Activated T-helper 2 cell treated with anti-CD3 and anti-CD28 coated beads, Interferon-gamma antibody, Interleukin-2, Interleukin-4, amounts not matched to agents 10 μg/mL and 5 μg/mL and 100 μg/mL, durations not matched to agents 14 hours and 24 hours and 36 hours (primary cell): ENCODE measurements at regions of chr15 and their contacts with region 1.

Region 1: GRCh38 chr15:84658080-84658787 is at the start of gene NMB:
- DNase-seq: peak; percentile 75
- H3K4me3 Mint-ChIP-seq: peak within 1 kb of the TSS; percentile 75
- H3K27ac Mint-ChIP-seq: peak within 1 kb of the TSS; percentile 73
- H3K4me1 Mint-ChIP-seq: peaks cover 25% of the 10 kb centered on the region
- H3K27me3 Mint-ChIP-seq: no peaks in the 10 kb centered on the region
- total RNA-seq, gene NMB: 2.5 and 3.0 TPM in 2 replicates

Region 2: DNA sequence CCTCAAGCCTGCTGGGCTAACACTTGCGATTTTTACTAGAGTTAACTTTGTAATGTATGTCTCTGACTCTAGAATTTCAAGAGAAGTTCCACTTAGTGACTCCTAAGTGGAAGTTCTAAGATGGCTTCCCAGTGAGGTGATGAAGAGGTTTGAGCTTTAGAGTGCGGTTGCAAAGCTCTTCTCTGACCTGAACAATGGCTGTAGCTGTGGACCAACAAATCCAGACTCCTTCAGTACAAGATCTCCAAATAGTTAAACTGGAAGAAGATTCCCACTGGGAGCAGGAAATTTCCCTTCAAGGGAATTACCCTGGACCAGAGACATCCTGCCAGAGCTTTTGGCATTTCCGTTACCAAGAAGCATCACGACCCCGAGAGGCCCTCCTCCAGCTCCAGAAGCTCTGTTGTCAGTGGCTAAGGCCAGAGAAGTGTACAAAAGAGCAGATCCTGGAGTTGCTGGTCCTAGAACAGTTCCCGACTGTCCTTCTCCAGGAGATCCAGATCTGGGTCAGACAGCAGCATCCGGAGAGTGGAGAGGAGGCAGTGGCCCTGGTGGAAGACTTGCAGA is 26.4 kb before region 1 on chr15:
- intact Hi-C with region 1: loop called (anchors 1 kb)
- DNase-seq: no peak
- H3K4me3 Mint-ChIP-seq: peak overlapping the region; percentile 95
- H3K27ac Mint-ChIP-seq: peak overlapping the region; percentile 92
- H3K4me1 Mint-ChIP-seq: peaks cover 34% of the 10 kb centered on the region
- H3K27me3 Mint-ChIP-seq: no peaks in the 10 kb centered on the region

Region 3: GRCh38 chr15:84734794-84735479 is 76.7 kb after region 1 on chr15:
- intact Hi-C with region 1: loop called (anchors 1 kb)
- DNase-seq: peak; percentile 72
- H3K4me3 Mint-ChIP-seq: peak overlapping the region; percentile 59
- H3K27ac Mint-ChIP-seq: peak overlapping the region; percentile 95
- H3K4me1 Mint-ChIP-seq: peaks cover 40% of the 10 kb centered on the region
- H3K27me3 Mint-ChIP-seq: no peaks in the 10 kb centered on the region

Region 4: DNA sequence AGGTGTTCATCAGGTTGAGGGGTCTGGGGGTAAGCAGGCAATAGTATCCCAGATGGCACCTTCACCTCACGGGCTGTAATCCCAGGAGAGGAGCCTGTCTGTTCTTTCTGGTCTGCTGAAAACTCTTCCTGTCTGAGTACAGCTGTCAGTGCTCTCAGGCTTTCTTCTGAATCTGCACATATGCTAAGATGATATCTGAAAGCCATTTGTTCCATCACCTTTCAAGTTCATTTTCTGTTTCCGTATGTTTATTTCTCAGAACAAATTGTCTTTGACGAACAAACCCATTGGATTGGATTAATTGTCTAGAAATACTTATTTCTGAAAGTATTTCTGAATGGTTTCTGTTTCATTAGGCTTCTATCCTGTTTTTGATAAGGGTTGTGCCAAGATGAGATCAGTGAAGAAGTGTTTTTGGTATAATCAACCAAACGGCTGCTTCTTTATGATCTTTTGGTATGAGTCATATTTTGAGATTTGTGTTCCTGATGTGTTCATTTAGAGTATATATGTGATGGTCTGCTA is 103.4 kb after region 1 on chr15:
- intact Hi-C with region 1: loop called (anchors 2 kb)
- DNase-seq: no peak
- H3K4me3 Mint-ChIP-seq: no peak overlapping the region
- H3K27ac Mint-ChIP-seq: no peak overlapping the region
- H3K4me1 Mint-ChIP-seq: peaks cover 30% of the 10 kb centered on the region
- H3K27me3 Mint-ChIP-seq: no peaks in the 10 kb centered on the region

Region 5: GRCh38 chr15:84904419-84904818 is 246.2 kb after region 1 on chr15:
- intact Hi-C with region 1: no loop called
- DNase-seq: no peak
- H3K4me3 Mint-ChIP-seq: no peak overlapping the region
- H3K27ac Mint-ChIP-seq: no peak overlapping the region
- H3K4me1 Mint-ChIP-seq: no peaks in the 10 kb centered on the region
- H3K27me3 Mint-ChIP-seq: peaks cover 5% of the 10 kb centered on the region

Region 6: DNA sequence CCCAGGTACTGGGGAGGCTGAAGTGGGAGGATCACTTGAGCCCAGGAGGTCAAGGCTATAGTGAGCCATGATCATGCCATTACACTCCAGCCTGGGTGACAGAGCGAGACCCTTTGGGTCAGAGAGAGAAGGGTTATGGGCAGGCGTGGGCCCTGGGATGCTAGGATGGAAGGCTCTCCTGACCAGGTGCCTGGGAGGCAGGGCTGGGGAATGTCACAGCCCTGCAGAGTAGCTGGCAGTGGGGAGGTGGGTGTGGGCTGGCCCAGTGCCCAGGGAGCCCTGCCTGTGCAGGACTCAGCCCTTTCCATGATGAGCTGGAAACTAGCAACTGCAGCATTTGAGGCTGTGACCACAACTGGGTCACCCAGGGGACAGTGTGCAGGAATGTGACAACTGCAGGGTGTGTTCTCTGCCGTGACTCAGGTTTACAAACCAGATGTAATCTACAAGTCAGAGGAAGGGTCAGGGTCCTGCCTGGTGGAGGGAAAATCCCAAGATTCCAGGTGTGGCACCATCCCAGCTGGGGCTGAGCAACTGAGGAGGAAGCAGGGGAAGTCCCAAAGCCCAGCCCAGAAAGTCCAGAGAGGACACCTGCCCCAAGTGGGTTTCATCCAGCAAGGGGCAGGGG is 271.6 kb after region 1 on chr15:
- intact Hi-C with region 1: loop called (anchors 1 kb)
- DNase-seq: no peak
- H3K4me3 Mint-ChIP-seq: no peak overlapping the region
- H3K27ac Mint-ChIP-seq: no peak overlapping the region
- H3K4me1 Mint-ChIP-seq: peaks cover 7% of the 10 kb centered on the region
- H3K27me3 Mint-ChIP-seq: no peaks in the 10 kb centered on the region